GM10248 (cell line): ENCODE measurements at regions of chr1 and their contacts with region 1.

Region 1: GRCh38 chr1:231364192-231364591 is 26.1 kb downstream of the SPRTN start:
- DNase-seq: no peak
- CTCF ChIP-seq: no peak

Region 2: GRCh38 chr1:231376875-231377549 is 12.8 kb after region 1 on chr1:
- CTCF ChIA-PET with region 1: interaction called, 16 read pairs
- POLR2A ChIA-PET with region 1: no interaction called
- DNase-seq: no peak
- CTCF ChIP-seq: no peak

Region 3: GRCh38 chr1:231390071-231390470 is 25.9 kb after region 1 on chr1:
- CTCF ChIA-PET with region 1: no interaction called
- POLR2A ChIA-PET with region 1: no interaction called
- DNase-seq: no peak
- CTCF ChIP-seq: no peak